Kidney (tissue), 22 donors: ENCODE measurements at regions of chr20 and their contacts with region 1.

Region 1: DNA sequence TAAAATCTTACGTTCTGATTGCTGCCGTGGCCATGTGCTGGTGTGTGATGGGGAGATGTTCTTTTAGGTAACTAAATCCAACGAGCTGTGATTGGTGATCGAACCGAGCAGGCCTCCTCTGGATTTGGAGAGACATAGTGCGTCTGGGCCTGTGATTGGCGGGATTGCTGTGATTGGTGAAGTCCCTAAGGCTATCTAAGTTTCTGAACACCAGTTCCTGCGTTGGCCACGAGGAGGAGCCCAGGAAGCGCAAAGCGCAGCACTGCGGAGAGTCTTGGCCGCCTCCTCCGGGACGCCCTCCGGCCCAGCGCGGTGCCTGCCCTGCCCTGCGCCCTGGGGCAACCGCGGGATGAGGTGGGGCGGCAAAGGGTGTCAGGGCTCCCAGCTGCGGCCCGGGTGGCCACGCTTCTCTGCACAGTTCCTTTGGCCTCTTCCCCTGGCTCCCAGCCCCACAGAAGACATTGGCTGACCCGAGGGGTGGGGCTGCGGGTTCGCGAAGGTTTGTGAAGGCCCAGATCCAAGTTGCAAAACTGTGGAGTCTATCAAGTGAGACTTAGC is 33.0 kb downstream of the HNF4A start:
- DNase-seq: peak in 3 of 5 donors; percentile 63 to 69 (median 69)
- H3K4me3 ChIP-seq: peak overlapping the region in 1 of 3 donors; percentile 25
- H3K27ac ChIP-seq: no peak overlapping the region
- H3K4me1 ChIP-seq: peaks cover 0 to 11% (median 8%) of the 10 kb centered on the region in 3 donors
- H3K27me3 ChIP-seq: no peaks in the 10 kb centered on the region
- CTCF ChIP-seq: peak; percentile 77

Region 2: DNA sequence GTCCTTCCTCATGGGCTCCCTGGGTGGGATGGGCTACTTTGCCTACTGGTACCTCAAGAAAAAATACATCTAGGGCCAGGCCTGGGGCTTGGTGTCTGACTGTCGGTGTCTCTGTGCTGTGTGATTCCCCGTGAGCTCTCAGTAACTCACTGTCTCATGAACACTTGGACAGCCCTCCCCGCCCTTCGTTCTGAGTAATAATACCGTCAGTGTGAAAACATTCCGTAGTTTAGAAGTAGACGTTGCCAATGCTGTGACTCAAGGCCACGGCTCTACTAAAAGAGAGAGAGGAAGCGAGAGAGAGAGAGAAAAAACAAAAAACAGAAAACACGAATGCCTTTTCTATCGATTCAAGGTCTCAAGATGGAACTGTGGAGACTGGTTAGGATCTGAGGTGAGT is 109.3 kb before region 1 on chr20:
- intact Hi-C with region 1: no loop called
- DNase-seq: no peak
- H3K4me3 ChIP-seq: no peak overlapping the region
- H3K27ac ChIP-seq: no peak overlapping the region
- H3K4me1 ChIP-seq: no peaks in the 10 kb centered on the region
- H3K27me3 ChIP-seq: no peaks in the 10 kb centered on the region
- CTCF ChIP-seq: no peak

Region 3: DNA sequence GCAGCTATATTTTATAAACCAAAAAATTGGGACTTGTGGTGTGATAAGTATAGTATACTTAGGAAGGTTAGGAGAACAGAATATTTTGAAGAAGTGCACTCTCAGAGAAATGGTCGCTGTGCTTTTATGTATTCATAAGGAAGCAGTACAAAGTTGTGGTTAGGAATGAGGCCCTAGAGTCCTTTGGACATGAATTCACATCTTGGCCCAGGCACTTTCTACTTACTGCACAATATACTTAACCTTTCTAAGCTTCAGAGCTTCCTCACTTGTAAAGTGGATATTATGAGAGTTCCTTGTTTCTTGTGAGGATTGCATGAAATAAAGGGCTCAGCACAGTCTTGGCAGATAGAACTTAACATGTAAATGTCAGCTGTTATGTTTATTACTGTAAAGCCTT is 154.3 kb after region 1 on chr20:
- intact Hi-C with region 1: no loop called
- DNase-seq: no peak
- H3K4me3 ChIP-seq: no peak overlapping the region
- H3K27ac ChIP-seq: no peak overlapping the region
- H3K4me1 ChIP-seq: peaks cover 0 to 4% (median 0%) of the 10 kb centered on the region in 3 donors
- H3K27me3 ChIP-seq: no peaks in the 10 kb centered on the region
- CTCF ChIP-seq: no peak

Region 4: DNA sequence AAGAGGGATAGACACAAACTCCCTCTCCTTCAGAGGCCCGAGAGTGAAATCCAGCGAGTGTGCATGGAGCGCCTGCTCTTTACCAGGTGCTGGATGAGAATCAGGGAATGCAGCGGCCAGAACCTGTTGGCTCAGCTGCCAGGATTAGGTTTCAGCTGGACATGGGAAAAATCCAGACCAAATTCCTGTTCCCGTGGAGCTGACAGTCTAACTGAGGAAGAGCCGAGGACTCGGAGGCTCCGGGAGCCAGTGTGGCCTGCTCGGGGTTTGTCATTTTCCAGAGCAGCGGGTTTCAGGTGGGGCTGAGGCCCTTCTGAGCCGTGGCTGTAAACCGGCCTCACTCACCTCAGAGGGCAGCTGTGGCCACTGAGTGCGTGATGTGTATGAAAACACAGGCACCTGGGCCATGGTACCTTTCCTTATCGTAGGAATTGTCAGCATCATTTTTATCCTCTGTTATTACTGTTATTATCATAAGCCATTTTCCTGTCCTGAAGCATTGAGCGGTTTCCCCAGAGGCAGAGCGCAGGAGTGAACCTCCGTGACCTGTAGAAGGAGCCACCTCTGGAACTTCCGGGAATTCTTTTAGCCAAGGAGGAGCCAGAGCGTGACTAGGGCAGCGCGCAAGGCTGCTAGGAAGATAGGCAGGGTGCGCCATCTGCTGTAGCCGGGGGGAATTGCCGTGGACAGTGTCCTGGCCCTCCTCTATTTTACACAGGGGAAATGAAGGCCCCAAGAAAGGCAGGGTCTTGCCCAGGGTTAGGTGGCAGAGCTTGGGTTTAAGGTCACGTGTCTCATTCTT is 221.2 kb after region 1 on chr20:
- intact Hi-C with region 1: loop called (anchors 10 kb)
- DNase-seq: peak; percentile 91 to 95 (median 94)
- H3K4me3 ChIP-seq: peak overlapping the region; percentile 17 to 46 (median 46)
- H3K27ac ChIP-seq: peak overlapping the region; percentile 71 to 87
- H3K4me1 ChIP-seq: peaks cover 0 to 14% (median 14%) of the 10 kb centered on the region in 3 donors
- H3K27me3 ChIP-seq: no peaks in the 10 kb centered on the region
- CTCF ChIP-seq: peak; percentile 96